ENCODE measurements at regions of chr9 and their contacts with region 1.

Region 1: DNA sequence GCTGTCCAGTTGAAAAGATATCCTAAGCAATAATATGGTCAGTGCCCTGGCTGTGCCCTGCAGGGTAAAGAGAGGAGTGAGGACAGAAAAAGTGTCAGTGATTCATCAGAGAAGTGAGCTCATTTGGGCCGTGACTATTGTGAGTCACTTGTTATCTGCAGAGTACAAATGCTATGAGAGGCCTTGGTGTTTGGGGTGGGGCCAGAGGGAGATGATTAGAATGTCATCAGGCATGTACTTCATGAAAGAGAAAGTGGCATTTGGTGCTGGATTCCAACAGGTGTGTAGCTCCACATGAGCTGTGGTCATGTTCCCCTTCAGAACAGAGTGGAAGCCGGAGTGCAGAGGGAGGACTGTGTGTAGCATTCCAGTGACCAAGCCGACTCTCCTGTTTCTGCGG is 174.1 kb downstream of the KDM4C start:
- DNase-seq: peak; percentile 85
- H3K4me3 Mint-ChIP-seq: peak overlapping the region; percentile 20
- H3K27ac Mint-ChIP-seq: peak overlapping the region; percentile 47
- H3K4me1 Mint-ChIP-seq: peaks cover 23% of the 10 kb centered on the region
- H3K27me3 Mint-ChIP-seq: no peaks in the 10 kb centered on the region
- CTCF ChIP-seq: no peak

Region 2: DNA sequence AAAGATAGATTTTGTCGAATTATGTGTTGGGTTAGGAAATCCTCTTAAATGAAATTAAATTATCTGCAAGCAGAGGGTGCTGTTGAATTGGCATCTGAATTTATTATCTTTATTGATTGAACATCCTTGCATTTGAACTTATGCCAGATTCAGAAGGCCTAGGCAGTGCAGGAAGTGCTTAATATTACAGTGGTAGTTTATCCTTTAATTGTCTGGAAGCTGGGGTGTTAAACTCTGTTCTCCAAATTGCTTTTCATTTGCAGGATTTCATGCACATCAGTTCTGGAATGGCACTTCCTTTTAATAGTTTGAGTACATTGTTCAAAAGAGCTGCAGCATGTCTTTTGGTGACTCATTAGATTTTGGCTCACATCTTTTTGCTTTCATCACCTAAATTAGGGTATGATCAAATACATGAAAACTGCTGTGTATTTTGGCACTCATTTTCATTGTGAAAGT is 12.2 kb after region 1 on chr9:
- CTCF ChIA-PET with region 1: interaction called, 15 read pairs
- POLR2A ChIA-PET with region 1: interaction called, 23 read pairs
- intact Hi-C with region 1: no loop called
- DNase-seq: peak; percentile 85
- H3K4me3 Mint-ChIP-seq: no peak overlapping the region
- H3K27ac Mint-ChIP-seq: no peak overlapping the region
- H3K4me1 Mint-ChIP-seq: peaks cover 14% of the 10 kb centered on the region
- H3K27me3 Mint-ChIP-seq: no peaks in the 10 kb centered on the region
- CTCF ChIP-seq: no peak

Region 3: DNA sequence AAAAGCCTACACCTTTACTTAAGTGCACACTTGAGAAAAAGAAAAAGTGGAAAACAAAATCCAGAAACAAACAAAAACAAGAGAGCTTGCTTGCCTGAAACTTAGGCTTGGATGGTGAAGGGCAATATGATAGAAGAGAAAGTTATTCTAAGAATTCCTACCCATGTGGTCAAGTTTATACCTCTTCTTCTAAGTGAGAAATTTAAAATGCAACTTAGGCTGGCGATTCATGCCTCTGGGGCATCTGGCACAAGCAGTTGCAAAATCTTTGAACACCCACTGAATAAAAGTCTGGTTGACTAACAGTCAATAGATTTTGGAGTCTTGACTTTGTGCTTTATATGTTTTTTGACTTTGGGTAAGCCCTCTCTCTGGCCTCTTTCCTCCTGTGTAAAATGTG is 65.4 kb after region 1 on chr9:
- CTCF ChIA-PET with region 1: no interaction called
- POLR2A ChIA-PET with region 1: no interaction called
- intact Hi-C with region 1: no loop called
- DNase-seq: peak; percentile 31
- H3K4me3 Mint-ChIP-seq: no peak overlapping the region
- H3K27ac Mint-ChIP-seq: no peak overlapping the region
- H3K4me1 Mint-ChIP-seq: peaks cover 12% of the 10 kb centered on the region
- H3K27me3 Mint-ChIP-seq: no peaks in the 10 kb centered on the region
- CTCF ChIP-seq: no peak